ENCODE measurements at regions of chr17 and their contacts with region 1.

Region 1: GRCh38 chr17:12974005-12974531 is 43.8 kb downstream of the ELAC2 start:
- DNase-seq: no peak
- ATAC-seq: no peak
- H3K4me3 ChIP-seq: no peak overlapping the region
- H3K27ac ChIP-seq: no peak overlapping the region
- H3K4me1 ChIP-seq: no peaks in the 10 kb centered on the region
- H3K27me3 ChIP-seq: peaks cover 20% of the 10 kb centered on the region
- CTCF ChIP-seq: no peak

Region 2: DNA sequence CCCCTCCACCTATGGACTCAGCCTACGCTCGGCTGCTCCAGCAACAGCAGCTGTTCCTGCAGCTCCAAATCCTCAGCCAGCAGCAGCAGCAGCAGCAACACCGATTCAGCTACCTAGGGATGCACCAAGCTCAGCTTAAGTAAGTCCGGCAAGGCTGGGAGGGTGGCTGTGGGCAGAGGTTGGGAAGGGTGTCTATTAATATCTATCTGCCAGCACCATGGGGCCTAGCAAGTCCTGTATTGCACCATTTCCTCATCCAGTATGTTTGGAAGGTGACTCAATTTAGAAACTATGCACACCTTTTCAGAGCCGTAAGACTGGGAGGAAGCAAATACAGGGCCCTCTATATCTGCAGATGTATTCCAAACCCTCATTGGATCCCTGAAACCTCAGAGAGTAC is 229.8 kb before region 1 on chr17:
- CTCF ChIA-PET with region 1: no interaction called
- POLR2A ChIA-PET with region 1: no interaction called
- intact Hi-C with region 1: no loop called
- DNase-seq: no peak
- ATAC-seq: no peak
- H3K4me3 ChIP-seq: no peak overlapping the region
- H3K27ac ChIP-seq: no peak overlapping the region
- H3K4me1 ChIP-seq: no peaks in the 10 kb centered on the region
- H3K27me3 ChIP-seq: peaks cover 11% of the 10 kb centered on the region
- CTCF ChIP-seq: no peak

Region 3: DNA sequence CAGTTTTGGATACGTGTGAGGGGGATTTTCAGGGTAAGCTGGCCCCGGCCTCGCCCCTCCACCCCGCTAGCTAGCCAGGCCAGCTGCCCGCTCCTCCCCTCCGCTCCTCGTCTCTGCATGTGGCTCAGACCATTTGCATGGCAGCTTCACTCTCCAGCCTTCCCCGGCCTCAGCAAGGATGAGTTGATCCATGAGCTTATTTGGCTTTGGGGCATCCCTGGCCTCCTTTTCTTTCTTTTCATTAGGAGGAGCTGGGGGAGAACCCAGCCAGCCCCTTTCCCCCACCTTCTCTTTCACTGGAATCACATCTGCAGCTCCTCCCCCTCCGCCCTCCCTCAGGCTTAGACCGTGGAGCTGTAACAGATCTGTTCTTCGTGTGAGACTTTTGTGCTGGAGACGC is 13.1 kb after region 1 on chr17:
- CTCF ChIA-PET with region 1: no interaction called
- POLR2A ChIA-PET with region 1: interaction called, 11 read pairs
- intact Hi-C with region 1: no loop called
- DNase-seq: no peak
- ATAC-seq: no peak
- H3K4me3 ChIP-seq: no peak overlapping the region
- H3K27ac ChIP-seq: no peak overlapping the region
- H3K4me1 ChIP-seq: peaks cover 11% of the 10 kb centered on the region; the same call in 1 of the 2 replicates
- H3K27me3 ChIP-seq: no peaks in the 10 kb centered on the region
- CTCF ChIP-seq: no peak

Measured in PC-3 (cell line).